ENCODE measurements at regions of chr12 and their contacts with region 1.

Region 1: DNA sequence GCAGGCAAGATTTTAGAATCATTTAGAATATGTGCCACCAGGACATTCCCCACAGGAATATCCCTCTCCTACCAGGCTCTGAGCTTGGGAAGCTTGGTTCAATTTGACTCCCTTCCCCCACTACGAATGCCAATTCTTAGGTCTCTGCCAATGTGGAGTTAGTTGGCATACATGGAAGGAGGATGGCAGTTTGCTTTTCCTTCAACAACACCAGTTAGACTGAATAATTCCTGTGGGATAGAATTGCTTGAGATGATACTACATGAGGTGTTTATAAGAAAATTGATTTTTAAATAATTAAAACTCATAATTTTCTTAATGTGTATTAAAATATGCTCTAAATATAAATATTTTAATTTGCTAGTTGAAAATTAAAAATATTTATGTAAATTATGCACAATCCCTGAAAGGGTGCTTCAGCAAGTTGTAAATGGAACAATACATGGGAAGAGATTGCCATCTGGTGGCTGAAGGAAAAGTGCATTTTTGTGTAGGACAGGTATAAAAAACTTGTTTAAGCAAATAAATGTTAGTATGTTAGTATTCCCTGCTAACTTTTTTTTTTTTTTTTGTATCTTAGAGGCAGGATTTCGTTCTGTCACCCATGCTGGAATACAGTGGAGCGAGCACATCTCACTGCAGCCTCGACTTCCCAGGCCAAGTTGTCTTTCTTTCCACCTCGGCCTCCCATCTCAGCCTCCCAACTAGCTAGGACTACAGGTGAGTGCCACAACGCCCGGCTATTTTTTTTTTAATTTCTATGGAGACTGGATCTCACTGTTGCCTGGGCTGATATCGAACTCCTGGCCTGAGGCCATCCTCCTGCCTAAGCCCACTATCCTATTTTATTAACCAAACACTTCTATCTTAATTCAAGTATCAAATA is 25.8 kb upstream of the STRAP start:
- DNase-seq: peak; percentile 66
- H3K4me3 Mint-ChIP-seq: no peak overlapping the region
- H3K27ac Mint-ChIP-seq: no peak overlapping the region
- H3K4me1 Mint-ChIP-seq: no peaks in the 10 kb centered on the region
- H3K27me3 Mint-ChIP-seq: peaks cover 3% of the 10 kb centered on the region

Region 2: GRCh38 chr12:15268927-15269552 is 587.3 kb before region 1 on chr12:
- CTCF ChIA-PET with region 1: interaction called, 4 read pairs
- intact Hi-C with region 1: loop called (anchors 2 kb)
- DNase-seq: peak; percentile 56
- H3K4me3 Mint-ChIP-seq: no peak overlapping the region
- H3K27ac Mint-ChIP-seq: no peak overlapping the region
- H3K4me1 Mint-ChIP-seq: no peaks in the 10 kb centered on the region
- H3K27me3 Mint-ChIP-seq: no peaks in the 10 kb centered on the region

Region 3: GRCh38 chr12:15532364-15532977 is 323.9 kb before region 1 on chr12:
- CTCF ChIA-PET with region 1: interaction called, 18 read pairs
- intact Hi-C with region 1: loop called (anchors 1 kb)
- DNase-seq: peak; percentile 72
- H3K4me3 Mint-ChIP-seq: no peak overlapping the region
- H3K27ac Mint-ChIP-seq: no peak overlapping the region
- H3K4me1 Mint-ChIP-seq: peaks cover 18% of the 10 kb centered on the region
- H3K27me3 Mint-ChIP-seq: no peaks in the 10 kb centered on the region

Region 4: DNA sequence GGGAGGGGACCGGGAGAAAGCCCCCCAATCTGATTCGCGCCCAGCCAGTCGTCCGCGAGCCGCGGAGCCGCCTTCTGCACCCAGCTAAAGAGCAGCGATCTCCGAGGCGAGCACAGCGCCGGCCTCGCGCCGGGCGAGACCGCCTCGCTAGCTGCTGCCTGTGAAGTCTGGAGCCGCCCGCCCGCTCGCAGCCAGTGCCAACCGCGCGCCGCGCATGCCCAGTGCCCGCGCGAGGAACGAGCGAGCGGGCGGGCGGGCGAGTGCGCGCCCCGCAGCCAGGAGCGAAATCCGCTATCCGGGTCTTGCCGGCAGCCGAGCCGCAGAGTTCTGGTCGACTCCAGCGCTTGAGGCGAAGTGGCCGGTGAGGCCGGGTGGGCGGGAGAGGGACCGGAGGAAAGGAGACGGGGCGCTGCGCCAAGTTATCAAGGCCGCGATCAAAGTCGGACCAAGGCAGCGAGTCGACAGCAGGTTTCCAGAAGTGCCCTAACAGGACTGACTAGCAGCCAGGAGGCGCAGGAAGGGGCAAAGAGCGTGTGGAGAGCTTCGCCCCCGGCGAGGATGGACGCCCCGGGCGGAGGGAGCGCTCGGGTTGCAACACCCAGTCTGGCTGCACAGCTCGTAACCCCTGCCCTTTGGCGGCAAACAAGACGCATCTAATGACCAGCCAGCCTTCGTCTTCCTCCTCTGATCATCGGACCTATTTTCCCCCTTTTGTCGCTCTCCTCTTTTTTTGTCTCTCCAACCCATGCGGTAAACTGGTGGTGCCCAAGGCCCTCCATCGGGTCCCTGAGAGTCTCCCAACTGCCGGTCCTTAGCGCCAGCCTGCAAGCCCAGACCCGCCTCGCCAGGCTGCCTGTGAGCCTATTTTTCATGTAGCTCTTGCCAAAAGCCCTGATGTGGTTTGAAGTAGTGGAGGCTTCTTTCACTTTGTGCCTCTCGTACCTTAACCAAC is 66.8 kb before region 1 on chr12 and contains the start of gene EPS8:
- CTCF ChIA-PET with region 1: interaction called, 6 read pairs
- intact Hi-C with region 1: loop called (anchors 2 kb)
- DNase-seq: peak; percentile 88
- H3K4me3 Mint-ChIP-seq: peak within 1 kb of the TSS; percentile 82
- H3K27ac Mint-ChIP-seq: no peak within 1 kb of the TSS
- H3K4me1 Mint-ChIP-seq: peaks cover 15% of the 10 kb centered on the region
- H3K27me3 Mint-ChIP-seq: peaks cover 49% of the 10 kb centered on the region
- total RNA-seq, gene EPS8: 3.2 to 5.6 TPM

Measured in activated naive CD4-positive, alpha-beta T cell treated with anti-CD3 and anti-CD28 coated beads for 36 hours (primary cell).